ENCODE measurements at regions of chr2 and their contacts with region 1.

Region 1: DNA sequence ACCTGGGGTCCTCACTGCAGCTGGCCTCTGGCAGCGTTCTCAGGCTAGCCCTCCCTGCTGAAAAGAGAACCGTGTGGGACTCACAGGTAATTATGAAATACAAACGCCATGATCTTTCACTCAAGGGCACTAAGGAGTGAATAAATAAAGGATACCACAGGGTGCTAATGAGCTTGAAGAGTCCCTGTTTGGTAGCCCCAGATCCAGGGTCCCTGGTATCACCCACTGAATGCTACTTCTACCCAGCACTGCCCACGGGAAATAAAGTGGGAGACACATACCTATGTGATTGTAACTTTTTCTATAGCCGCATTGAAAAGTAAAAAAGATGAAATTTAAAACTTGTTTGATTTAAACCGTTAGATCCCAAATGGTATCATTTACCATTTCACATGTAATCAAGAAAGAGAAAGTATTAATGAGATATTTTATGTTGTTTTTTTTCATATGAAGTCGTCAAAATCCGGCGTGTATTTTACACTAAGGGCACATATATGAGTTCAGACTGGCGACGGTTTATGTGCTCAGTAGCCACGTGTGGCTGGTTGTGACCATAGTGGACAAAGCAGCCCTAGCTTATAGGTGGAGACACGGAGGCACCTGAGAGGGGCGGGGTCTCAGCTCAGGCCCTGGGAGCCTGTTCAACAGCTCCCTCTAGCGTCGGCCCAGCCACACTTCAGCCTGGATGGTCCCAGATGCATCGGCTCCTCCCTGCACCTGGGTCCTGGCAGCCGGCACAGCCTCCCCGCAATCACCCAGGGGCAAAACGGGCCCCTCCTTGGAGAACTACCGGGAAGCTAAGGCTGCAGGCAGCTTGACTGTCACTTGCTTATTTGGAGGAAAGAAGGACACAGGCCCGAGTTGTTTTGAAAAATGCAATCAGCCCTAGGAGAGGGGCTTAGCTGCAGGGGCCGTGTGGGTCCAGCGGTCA is 39.2 kb downstream of the ODC1 start:
- DNase-seq: peak; percentile 89
- ATAC-seq: peak; percentile 69
- H3K4me3 Mint-ChIP-seq: peak overlapping the region; percentile 57
- H3K27ac Mint-ChIP-seq: peak overlapping the region; percentile 94
- H3K4me1 Mint-ChIP-seq: peaks cover 60% of the 10 kb centered on the region
- H3K27me3 Mint-ChIP-seq: no peaks in the 10 kb centered on the region
- CTCF ChIP-seq: peak; percentile 97

Region 2: DNA sequence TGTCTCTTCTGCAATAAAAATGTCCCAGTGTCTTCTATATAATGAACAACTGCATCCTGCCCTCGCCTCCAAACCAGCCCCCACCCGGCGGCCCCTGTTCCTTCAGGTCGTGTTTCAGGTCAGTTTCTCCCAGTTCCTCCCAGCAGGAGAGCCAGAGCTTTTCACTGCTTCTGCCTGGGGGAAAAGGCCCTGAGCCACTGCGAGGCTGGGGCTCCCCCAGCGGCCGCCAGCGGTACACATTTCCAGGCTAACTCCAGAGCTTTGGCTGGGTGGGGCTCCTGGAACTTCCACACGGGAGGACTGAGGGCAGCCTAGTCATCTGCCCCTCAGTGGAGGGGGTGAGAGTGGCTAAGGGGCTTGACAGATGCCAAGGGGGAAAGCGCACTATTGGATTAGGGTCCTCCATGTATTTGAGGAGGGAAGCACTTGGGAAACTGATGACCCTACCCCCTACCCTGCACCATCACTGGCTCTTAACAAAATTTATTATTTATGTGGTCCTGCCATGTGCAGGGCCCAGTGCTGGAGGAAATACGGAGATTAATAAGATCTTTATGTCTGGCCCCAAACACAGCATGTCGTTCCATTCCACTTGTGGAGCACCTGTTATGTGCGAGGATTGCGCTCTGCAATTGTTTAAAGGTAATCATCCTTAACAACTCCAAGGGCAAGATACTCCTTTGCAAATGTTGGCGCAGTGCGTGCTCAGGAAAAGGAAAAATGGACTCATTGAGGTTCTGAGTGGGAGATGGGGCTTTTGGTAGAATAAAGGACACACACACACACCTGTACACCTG is 311.4 kb before region 1 on chr2:
- CTCF ChIA-PET with region 1: interaction called, 11 read pairs
- POLR2A ChIA-PET with region 1: no interaction called
- intact Hi-C with region 1: no loop called
- DNase-seq: peak; percentile 48
- ATAC-seq: peak; percentile 88
- H3K4me3 Mint-ChIP-seq: no peak overlapping the region
- H3K27ac Mint-ChIP-seq: no peak overlapping the region
- H3K4me1 Mint-ChIP-seq: no peaks in the 10 kb centered on the region
- H3K27me3 Mint-ChIP-seq: peaks cover 17% of the 10 kb centered on the region
- CTCF ChIP-seq: peak; percentile 91

Region 3: GRCh38 chr2:10267551-10268465 is 141.1 kb before region 1 on chr2:
- CTCF ChIA-PET with region 1: interaction called, 44 read pairs
- POLR2A ChIA-PET with region 1: interaction called, 3 read pairs
- intact Hi-C with region 1: no loop called
- DNase-seq: no peak
- ATAC-seq: no peak
- H3K4me3 Mint-ChIP-seq: no peak overlapping the region
- H3K27ac Mint-ChIP-seq: no peak overlapping the region
- H3K4me1 Mint-ChIP-seq: peaks cover 8% of the 10 kb centered on the region
- H3K27me3 Mint-ChIP-seq: no peaks in the 10 kb centered on the region
- CTCF ChIP-seq: no peak

Region 4: DNA sequence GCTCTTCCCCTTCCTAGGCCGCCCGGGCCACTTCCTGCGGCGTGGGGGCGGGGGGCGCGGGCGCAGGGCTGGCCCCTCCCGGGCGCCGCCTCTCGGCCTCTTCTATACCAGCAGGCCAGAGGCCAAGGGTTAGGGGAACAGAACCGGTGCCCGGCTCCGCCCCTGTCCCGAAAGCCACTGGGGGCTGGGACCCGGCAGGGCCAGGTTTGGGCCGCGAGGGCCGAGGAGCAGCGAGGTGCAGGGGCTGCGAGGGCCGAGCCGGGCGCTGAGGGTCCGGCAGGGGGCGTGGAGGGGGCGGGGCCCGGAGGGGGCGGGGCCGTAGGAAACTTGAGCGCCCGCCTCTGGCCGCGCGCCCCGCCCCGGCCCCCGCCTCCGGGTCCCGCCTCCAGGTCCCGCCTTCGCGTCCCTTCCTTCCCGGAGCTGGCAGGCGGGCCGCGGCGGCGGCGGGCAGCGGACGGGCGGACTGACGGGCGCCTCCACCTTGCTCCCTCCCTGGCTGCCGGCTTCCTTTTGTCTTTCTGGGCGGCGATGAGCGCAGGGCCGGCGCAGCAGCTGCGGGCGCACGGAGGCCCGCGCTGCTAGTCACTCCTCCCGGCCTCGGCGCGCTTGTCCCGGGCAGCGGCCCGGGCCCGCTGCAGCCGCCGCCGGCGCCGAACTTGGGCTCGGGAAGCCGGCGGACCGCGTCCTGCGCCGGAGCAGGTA is 106.3 kb before region 1 on chr2 and contains the start of gene HPCAL1:
- CTCF ChIA-PET with region 1: interaction called, 135 read pairs
- POLR2A ChIA-PET with region 1: interaction called, 11 read pairs
- intact Hi-C with region 1: loop called (anchors 2 kb)
- DNase-seq: peak; percentile 89
- ATAC-seq: peak; percentile 81
- H3K4me3 Mint-ChIP-seq: peak within 1 kb of the TSS; percentile 96
- H3K27ac Mint-ChIP-seq: peak within 1 kb of the TSS; percentile 89
- H3K4me1 Mint-ChIP-seq: peaks cover 68% of the 10 kb centered on the region
- H3K27me3 Mint-ChIP-seq: no peaks in the 10 kb centered on the region
- CTCF ChIP-seq: peak; percentile 73
- total RNA-seq, gene HPCAL1: 166 to 170 TPM

Region 5: GRCh38 chr2:10382354-10383061 is 26.4 kb before region 1 on chr2:
- CTCF ChIA-PET with region 1: interaction called, 75 read pairs
- POLR2A ChIA-PET with region 1: no interaction called
- intact Hi-C with region 1: no loop called
- DNase-seq: peak; percentile 56
- ATAC-seq: peak; percentile 75
- H3K4me3 Mint-ChIP-seq: peak overlapping the region; percentile 31
- H3K27ac Mint-ChIP-seq: peak overlapping the region; percentile 73
- H3K4me1 Mint-ChIP-seq: peaks cover 94% of the 10 kb centered on the region
- H3K27me3 Mint-ChIP-seq: no peaks in the 10 kb centered on the region
- CTCF ChIP-seq: no peak

Region 6: DNA sequence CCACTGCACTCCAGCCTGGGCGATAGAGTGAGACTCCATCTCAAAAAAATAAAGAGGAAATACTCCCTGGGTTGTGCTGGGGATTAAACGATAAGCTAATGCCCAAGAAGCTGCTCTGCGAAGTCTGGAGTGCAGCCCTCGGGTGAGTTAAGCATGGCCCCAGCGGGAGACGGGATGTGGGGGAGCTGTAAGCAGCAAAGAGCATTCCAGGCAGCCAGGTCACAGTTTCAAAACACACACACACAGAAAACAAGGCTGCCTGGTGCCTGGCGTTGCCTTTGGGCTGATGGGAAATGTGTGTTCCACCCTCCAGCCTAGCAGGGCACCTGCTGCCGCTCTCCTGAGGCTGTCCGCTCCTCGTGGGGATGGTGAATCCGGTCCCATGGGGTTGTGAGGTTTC is 15.1 kb after region 1 on chr2:
- CTCF ChIA-PET with region 1: interaction called, 19 read pairs
- POLR2A ChIA-PET with region 1: no interaction called
- intact Hi-C with region 1: no loop called
- DNase-seq: no peak
- ATAC-seq: no peak
- H3K4me3 Mint-ChIP-seq: no peak overlapping the region
- H3K27ac Mint-ChIP-seq: no peak overlapping the region
- H3K4me1 Mint-ChIP-seq: no peaks in the 10 kb centered on the region
- H3K27me3 Mint-ChIP-seq: no peaks in the 10 kb centered on the region
- CTCF ChIP-seq: no peak

Region 7: GRCh38 chr2:10700078-10700803 is 291.3 kb after region 1 on chr2:
- CTCF ChIA-PET with region 1: no interaction called
- POLR2A ChIA-PET with region 1: no interaction called
- intact Hi-C with region 1: no loop called
- DNase-seq: no peak
- ATAC-seq: no peak
- H3K4me3 Mint-ChIP-seq: no peak overlapping the region
- H3K27ac Mint-ChIP-seq: no peak overlapping the region
- H3K4me1 Mint-ChIP-seq: peaks cover 5% of the 10 kb centered on the region
- H3K27me3 Mint-ChIP-seq: peaks cover 2% of the 10 kb centered on the region
- CTCF ChIP-seq: no peak